CD4-positive, alpha-beta memory T cell (primary cell): ENCODE measurements at regions of chr1 and their contacts with region 1.

Region 1: GRCh38 chr1:184973272-184974055 is 844 bp downstream of the NIBAN1 start:
- DNase-seq: peak in 3 of 5 donors; percentile 55 to 86 (median 71)
- H3K4me3 ChIP-seq: peak overlapping the region; percentile 70 to 85
- H3K4me3 Mint-ChIP-seq: peak overlapping the region; percentile 93 to 100 (median 98)
- H3K27ac ChIP-seq: peak overlapping the region; percentile 91
- H3K27ac Mint-ChIP-seq: peak overlapping the region; percentile 96 to 100 (median 97)
- H3K4me1 ChIP-seq: peaks cover 66% of the 10 kb centered on the region
- H3K4me1 Mint-ChIP-seq: peaks cover 37 to 74% (median 55%) of the 10 kb centered on the region in 4 donors
- H3K27me3 ChIP-seq: no peaks in the 10 kb centered on the region
- H3K27me3 Mint-ChIP-seq: no peaks in the 10 kb centered on the region

Region 2: GRCh38 chr1:184843732-184844495 is 129.6 kb before region 1 on chr1:
- CTCF ChIA-PET with region 1: no interaction called
- POLR2A ChIA-PET with region 1: interaction called, 10 read pairs
- intact Hi-C with region 1: no loop called
- DNase-seq: peak; percentile 69 to 85 (median 75)
- H3K4me3 ChIP-seq: no peak overlapping the region
- H3K4me3 Mint-ChIP-seq: peak overlapping the region in 7 of 8 donors; percentile 7 to 82 (median 28)
- H3K27ac ChIP-seq: peak overlapping the region; percentile 24
- H3K27ac Mint-ChIP-seq: peak overlapping the region; percentile 78 to 98 (median 90)
- H3K4me1 ChIP-seq: peaks cover 54% of the 10 kb centered on the region
- H3K4me1 Mint-ChIP-seq: peaks cover 35 to 49% (median 40%) of the 10 kb centered on the region in 4 donors
- H3K27me3 ChIP-seq: no peaks in the 10 kb centered on the region
- H3K27me3 Mint-ChIP-seq: no peaks in the 10 kb centered on the region

Region 3: DNA sequence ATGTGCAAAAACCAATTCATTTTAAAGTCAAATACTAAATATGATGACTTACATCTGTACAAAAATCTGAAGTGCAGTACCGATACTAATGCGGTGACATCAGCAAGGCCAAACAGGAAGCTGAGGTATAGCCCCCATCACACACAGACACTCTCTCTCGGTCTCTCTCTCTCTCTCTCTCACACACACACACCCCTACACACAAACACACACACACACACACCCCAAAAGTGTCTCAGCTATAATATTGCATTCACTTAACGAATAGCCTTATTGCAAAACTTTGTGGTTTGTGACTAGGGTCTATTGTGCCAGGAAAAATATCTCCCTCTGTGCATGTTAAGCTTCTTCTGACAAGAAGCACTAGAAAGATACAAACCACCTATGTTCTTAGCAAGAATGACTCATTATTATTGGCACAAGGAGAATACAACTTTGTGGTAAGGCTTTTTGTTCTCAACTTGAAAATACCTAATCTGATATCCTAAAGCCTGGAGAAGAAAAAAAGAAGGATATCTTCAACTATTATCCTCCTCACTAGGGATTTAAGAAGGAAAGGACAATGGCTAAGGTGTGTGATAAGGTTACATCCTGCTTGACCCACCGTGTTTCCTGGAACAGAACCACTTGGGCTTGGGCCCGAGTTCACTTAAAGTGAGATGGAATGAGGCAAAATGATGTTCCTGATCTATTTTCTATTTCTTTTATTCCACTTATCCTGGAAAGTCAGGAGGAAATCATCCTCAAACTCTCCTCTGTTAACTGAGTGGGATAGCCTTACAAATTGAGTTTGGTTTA is 106.3 kb before region 1 on chr1:
- CTCF ChIA-PET with region 1: interaction called, 4 read pairs
- POLR2A ChIA-PET with region 1: interaction called, 17 read pairs
- intact Hi-C with region 1: no loop called
- DNase-seq: peak; percentile 73 to 86 (median 76)
- H3K4me3 ChIP-seq: no peak overlapping the region
- H3K4me3 Mint-ChIP-seq: peak overlapping the region; percentile 19 to 77 (median 58)
- H3K27ac ChIP-seq: peak overlapping the region; percentile 43
- H3K27ac Mint-ChIP-seq: peak overlapping the region; percentile 81 to 95 (median 90)
- H3K4me1 ChIP-seq: peaks cover 33% of the 10 kb centered on the region
- H3K4me1 Mint-ChIP-seq: peaks cover 32 to 50% (median 39%) of the 10 kb centered on the region in 4 donors
- H3K27me3 ChIP-seq: no peaks in the 10 kb centered on the region
- H3K27me3 Mint-ChIP-seq: peaks cover 0 to 2% of the 10 kb centered on the region in 2 donors

Region 4: DNA sequence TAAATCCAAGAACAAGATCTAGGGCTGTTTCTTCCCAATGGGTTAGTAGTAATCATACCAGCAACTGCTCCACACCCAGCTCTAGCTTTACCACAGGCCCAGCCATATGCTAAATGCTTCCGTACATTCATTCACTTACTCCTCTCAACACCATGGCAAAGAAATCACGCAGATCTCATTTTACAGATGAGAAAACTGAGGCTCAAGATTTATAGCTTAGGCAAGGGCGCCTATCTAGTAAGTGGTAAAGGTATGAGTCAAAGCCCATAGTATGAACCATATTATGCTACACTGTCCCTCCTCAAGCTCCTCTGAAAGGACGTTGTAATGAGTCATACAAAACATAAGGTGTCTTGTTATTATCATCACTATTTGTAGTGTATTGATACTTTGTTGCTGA is 81.3 kb before region 1 on chr1:
- CTCF ChIA-PET with region 1: no interaction called
- POLR2A ChIA-PET with region 1: interaction called, 43 read pairs
- intact Hi-C with region 1: loop called (anchors 2 kb)
- DNase-seq: peak; percentile 19 to 39 (median 29)
- H3K4me3 ChIP-seq: no peak overlapping the region
- H3K4me3 Mint-ChIP-seq: peak overlapping the region in 7 of 8 donors; percentile 49 to 71 (median 59)
- H3K27ac ChIP-seq: peak overlapping the region; percentile 52
- H3K27ac Mint-ChIP-seq: peak overlapping the region; percentile 74 to 95 (median 90)
- H3K4me1 ChIP-seq: peaks cover 64% of the 10 kb centered on the region
- H3K4me1 Mint-ChIP-seq: peaks cover 42 to 74% (median 58%) of the 10 kb centered on the region in 4 donors
- H3K27me3 ChIP-seq: no peaks in the 10 kb centered on the region
- H3K27me3 Mint-ChIP-seq: no peaks in the 10 kb centered on the region

Region 5: DNA sequence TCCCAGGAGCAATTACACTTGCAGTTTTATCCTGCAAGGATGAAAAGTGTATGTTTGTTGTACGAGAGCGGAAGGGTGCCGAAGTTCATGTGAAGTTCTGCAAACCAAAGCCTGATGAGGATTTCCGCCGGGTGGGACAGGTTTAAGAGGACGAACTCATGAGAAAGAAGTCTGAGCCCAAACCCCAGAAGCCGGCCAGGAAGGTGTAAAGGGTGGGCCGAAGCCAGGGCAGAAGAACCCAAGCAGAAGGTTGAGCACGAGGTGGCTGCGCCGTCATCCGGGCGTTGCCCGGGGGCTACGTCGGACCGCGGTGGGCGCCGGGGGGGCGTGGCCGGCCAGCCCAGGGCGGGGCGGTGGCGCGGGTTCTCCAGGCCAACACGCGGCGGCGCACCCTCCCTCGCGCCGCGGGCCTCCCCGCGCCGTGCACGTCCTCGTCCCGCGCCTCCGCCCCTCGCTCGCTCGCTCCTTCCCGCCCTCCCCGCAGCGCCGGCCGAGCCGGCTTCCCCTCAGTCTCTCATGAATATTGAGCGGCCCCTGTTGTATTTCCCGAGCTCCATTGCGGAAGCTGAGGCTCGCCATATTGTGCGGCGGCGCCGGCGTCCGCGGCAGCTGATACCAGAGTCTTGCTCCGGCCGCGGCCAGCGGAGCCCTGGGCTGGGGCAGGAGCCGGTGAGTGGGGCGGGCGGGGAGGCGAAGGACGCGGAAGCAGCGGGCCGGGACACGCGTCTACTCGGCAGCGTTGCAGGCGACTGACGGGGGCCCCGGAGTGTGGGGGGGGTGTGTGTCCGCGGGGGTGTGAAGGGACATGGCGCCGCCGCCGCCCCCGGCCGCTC is 71.7 kb after region 1 on chr1 and contains the start of gene RNF2:
- CTCF ChIA-PET with region 1: no interaction called
- POLR2A ChIA-PET with region 1: interaction called, 10 read pairs
- intact Hi-C with region 1: loop called (anchors 5 kb)
- DNase-seq: peak; percentile 76 to 88 (median 83)
- H3K4me3 ChIP-seq: peak within 1 kb of the TSS; percentile 72 to 78
- H3K4me3 Mint-ChIP-seq: peak within 1 kb of the TSS; percentile 94 to 99 (median 96)
- H3K27ac ChIP-seq: peak within 1 kb of the TSS; percentile 71
- H3K27ac Mint-ChIP-seq: peak within 1 kb of the TSS; percentile 88 to 98 (median 96)
- H3K4me1 ChIP-seq: peaks cover 31% of the 10 kb centered on the region
- H3K4me1 Mint-ChIP-seq: peaks cover 31 to 53% (median 43%) of the 10 kb centered on the region in 4 donors
- H3K27me3 ChIP-seq: no peaks in the 10 kb centered on the region
- H3K27me3 Mint-ChIP-seq: no peaks in the 10 kb centered on the region
- total RNA-seq, gene RNF2: 27.0 TPM